Naive thymus-derived CD4-positive, alpha-beta T cell (primary cell): ENCODE measurements at regions of chr6 and their contacts with region 1.

Region 1: GRCh38 chr6:132391391-132392271 is 9.6 kb downstream of the MOXD1 start:
- DNase-seq: no peak
- ATAC-seq: no peak
- H3K4me3 ChIP-seq: no peak overlapping the region
- H3K4me3 Mint-ChIP-seq: no peak overlapping the region
- H3K27ac ChIP-seq: no peak overlapping the region
- H3K27ac Mint-ChIP-seq: no peak overlapping the region
- H3K4me1 ChIP-seq: no peaks in the 10 kb centered on the region
- H3K4me1 Mint-ChIP-seq: no peaks in the 10 kb centered on the region
- H3K27me3 ChIP-seq: no peaks in the 10 kb centered on the region
- H3K27me3 Mint-ChIP-seq: peaks cover 10 to 47% (median 28%) of the 10 kb centered on the region in 5 donors

Region 2: DNA sequence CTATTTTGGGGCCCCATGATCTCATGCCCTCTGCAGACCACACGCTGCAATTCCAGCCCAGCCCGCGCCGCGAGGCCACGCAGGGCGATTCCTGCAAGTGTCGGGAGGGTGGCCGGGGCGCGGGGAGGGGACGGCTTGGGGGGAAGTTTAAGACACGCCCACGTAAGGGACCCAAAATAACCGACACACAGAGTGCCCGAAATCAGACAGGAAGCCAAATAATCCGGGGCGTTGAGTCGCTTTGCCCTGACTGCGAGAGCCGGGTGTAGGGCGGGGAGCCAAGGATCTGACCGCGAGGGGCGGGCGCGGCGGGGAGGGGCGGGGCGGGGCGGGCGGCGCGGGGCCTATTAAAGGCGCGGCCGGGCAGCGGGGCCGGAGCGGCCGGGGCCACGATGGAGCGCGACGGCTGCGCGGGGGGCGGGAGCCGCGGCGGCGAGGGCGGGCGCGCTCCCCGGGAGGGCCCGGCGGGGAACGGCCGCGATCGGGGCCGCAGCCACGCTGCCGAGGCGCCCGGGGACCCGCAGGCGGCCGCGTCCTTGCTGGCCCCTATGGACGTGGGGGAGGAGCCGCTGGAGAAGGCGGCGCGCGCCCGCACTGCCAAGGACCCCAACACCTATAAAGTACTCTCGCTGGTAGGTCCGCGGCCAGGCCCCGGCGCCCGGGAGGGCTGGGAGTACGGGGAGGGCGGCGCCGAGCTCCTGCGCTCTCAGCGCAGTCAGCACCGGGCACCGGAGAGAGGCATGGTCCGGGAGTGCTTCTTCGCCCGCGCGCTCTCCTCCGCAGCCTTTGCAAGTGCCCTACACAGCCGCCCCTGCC is 583.8 kb before region 1 on chr6 and contains the start of gene ENPP1:
- CTCF ChIA-PET with region 1: no interaction called
- POLR2A ChIA-PET with region 1: no interaction called
- intact Hi-C with region 1: no loop called
- DNase-seq: peak in 7 of 9 donors; percentile 4 to 52 (median 13)
- ATAC-seq: peak; percentile 73
- H3K4me3 ChIP-seq: peak within 1 kb of the TSS; percentile 57
- H3K4me3 Mint-ChIP-seq: peak within 1 kb of the TSS; percentile 73 to 91 (median 88)
- H3K27ac ChIP-seq: no peak within 1 kb of the TSS
- H3K27ac Mint-ChIP-seq: peak within 1 kb of the TSS in 4 of 9 donors; percentile 17 to 43 (median 32)
- H3K4me1 ChIP-seq: peaks cover 8 to 12% of the 10 kb centered on the region in 2 donors
- H3K4me1 Mint-ChIP-seq: peaks cover 11 to 29% (median 21%) of the 10 kb centered on the region in 7 donors
- H3K27me3 ChIP-seq: no peaks in the 10 kb centered on the region
- H3K27me3 Mint-ChIP-seq: peaks cover 6 to 68% (median 40%) of the 10 kb centered on the region in 5 donors
- total RNA-seq, gene ENPP1: 0.07 to 0.69 (median 0.21) TPM in 4 of 5 experiments, not detected in the other

Region 3: DNA sequence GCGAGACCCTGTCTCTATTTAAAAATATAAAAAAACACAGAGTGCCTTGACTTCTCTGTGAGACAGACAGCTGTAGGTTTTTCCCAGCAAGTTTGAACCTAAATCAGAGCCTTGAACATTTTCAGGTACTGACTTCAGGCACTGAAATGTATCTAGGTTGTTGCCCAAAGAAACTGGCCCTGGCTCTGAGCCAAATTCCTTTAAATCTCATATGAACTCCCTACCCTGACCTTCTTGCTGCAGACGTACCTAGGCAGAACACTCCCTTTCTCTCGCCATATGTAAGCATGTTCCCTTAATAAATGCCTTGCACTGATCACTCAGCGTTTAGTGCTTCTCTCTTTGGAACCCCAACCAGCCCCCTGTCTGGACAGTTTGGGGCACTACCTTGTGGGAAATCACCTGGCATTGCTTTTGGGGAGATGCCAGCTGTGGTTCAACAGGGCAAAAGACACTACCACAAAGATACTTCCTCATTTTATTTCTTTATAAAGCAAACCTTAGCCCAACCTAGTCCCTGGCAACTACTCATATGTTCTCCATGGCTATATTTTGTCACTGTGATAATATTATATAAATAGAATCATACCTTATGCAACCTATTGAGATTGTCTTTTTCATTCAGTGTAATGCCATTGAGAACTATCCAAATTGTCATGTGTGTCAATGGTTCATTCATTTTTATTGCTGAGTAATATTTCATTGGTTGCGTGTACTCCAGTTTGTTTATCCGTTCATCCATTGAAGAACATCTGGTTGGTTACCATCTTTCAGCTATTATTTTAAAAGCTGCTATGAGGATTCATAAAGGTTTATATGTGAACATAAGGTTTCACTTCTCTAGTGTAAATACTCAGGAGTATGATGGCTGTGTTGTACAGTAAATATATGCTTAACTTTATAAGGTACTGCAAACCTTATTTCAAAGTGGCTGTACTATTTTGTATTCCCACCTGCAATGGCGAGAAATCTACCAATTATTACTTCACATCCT is 105.3 kb before region 1 on chr6:
- CTCF ChIA-PET with region 1: no interaction called
- POLR2A ChIA-PET with region 1: no interaction called
- intact Hi-C with region 1: loop called in 1 of 2 experiments (anchors 5 kb)
- DNase-seq: no peak
- ATAC-seq: peak; percentile 41
- H3K4me3 ChIP-seq: no peak overlapping the region
- H3K4me3 Mint-ChIP-seq: no peak overlapping the region
- H3K27ac ChIP-seq: no peak overlapping the region
- H3K27ac Mint-ChIP-seq: no peak overlapping the region
- H3K4me1 ChIP-seq: no peaks in the 10 kb centered on the region
- H3K4me1 Mint-ChIP-seq: no peaks in the 10 kb centered on the region
- H3K27me3 ChIP-seq: no peaks in the 10 kb centered on the region
- H3K27me3 Mint-ChIP-seq: peaks cover 7 to 42% (median 21%) of the 10 kb centered on the region in 5 donors

Region 4: GRCh38 chr6:132300323-132300949 is 91.2 kb before region 1 on chr6:
- CTCF ChIA-PET with region 1: no interaction called
- POLR2A ChIA-PET with region 1: no interaction called
- intact Hi-C with region 1: loop called in 1 of 2 experiments (anchors 2 kb)
- DNase-seq: peak in 1 of 9 donors; percentile 11
- ATAC-seq: no peak
- H3K4me3 ChIP-seq: no peak overlapping the region
- H3K4me3 Mint-ChIP-seq: no peak overlapping the region
- H3K27ac ChIP-seq: no peak overlapping the region
- H3K27ac Mint-ChIP-seq: no peak overlapping the region
- H3K4me1 ChIP-seq: no peaks in the 10 kb centered on the region
- H3K4me1 Mint-ChIP-seq: peaks cover 0 to 1% (median 0%) of the 10 kb centered on the region in 7 donors
- H3K27me3 ChIP-seq: no peaks in the 10 kb centered on the region
- H3K27me3 Mint-ChIP-seq: peaks cover 13 to 23% (median 19%) of the 10 kb centered on the region in 5 donors

Region 5: GRCh38 chr6:132445201-132445951 is 53.7 kb after region 1 on chr6:
- CTCF ChIA-PET with region 1: no interaction called
- POLR2A ChIA-PET with region 1: no interaction called
- intact Hi-C with region 1: no loop called
- DNase-seq: no peak
- ATAC-seq: no peak
- H3K4me3 ChIP-seq: no peak overlapping the region
- H3K4me3 Mint-ChIP-seq: no peak overlapping the region
- H3K27ac ChIP-seq: no peak overlapping the region
- H3K27ac Mint-ChIP-seq: no peak overlapping the region
- H3K4me1 ChIP-seq: no peaks in the 10 kb centered on the region
- H3K4me1 Mint-ChIP-seq: no peaks in the 10 kb centered on the region
- H3K27me3 ChIP-seq: no peaks in the 10 kb centered on the region
- H3K27me3 Mint-ChIP-seq: no peaks in the 10 kb centered on the region

Region 6: DNA sequence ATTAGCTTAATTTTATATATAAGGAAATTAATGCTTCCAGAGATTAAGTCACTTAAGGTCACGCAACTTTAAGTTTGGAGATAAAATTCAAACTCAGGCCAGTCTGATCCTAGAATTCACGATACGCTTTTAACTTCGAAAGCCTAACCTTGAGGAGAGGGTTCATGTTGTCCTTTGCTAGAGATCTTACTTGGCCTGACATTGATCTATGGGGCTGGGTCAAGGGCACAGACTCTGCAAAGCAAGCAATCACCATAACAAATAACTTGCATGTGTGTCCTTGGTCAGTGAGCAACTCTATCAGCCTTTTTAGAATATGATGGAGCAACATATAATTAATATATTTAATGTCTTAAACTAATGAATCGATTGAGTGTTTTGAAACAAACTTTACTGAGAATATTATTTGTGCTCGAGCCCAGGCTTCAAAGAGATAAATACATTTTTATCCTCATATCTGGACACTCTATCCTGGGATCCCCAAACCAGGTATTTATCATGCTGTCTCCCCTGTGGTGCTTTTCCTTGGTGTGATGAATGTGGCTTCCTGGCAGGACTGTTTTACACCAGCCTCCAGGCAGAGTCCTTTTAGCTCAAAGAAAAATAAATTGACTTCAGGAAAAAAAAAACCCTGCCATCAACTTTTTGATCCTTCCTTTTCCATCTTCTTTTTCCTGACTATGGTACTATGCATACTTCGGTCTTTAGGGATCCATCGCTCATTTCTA is 451.8 kb after region 1 on chr6:
- CTCF ChIA-PET with region 1: no interaction called
- POLR2A ChIA-PET with region 1: no interaction called
- intact Hi-C with region 1: no loop called
- DNase-seq: no peak
- ATAC-seq: no peak
- H3K4me3 ChIP-seq: no peak overlapping the region
- H3K4me3 Mint-ChIP-seq: no peak overlapping the region
- H3K27ac ChIP-seq: no peak overlapping the region
- H3K27ac Mint-ChIP-seq: no peak overlapping the region
- H3K4me1 ChIP-seq: no peaks in the 10 kb centered on the region
- H3K4me1 Mint-ChIP-seq: peaks cover 0 to 2% (median 0%) of the 10 kb centered on the region in 7 donors
- H3K27me3 ChIP-seq: no peaks in the 10 kb centered on the region
- H3K27me3 Mint-ChIP-seq: peaks cover 3 to 5% (median 4%) of the 10 kb centered on the region in 5 donors